ENCODE measurements at regions of chr15 and their contacts with region 1.

Region 1: DNA sequence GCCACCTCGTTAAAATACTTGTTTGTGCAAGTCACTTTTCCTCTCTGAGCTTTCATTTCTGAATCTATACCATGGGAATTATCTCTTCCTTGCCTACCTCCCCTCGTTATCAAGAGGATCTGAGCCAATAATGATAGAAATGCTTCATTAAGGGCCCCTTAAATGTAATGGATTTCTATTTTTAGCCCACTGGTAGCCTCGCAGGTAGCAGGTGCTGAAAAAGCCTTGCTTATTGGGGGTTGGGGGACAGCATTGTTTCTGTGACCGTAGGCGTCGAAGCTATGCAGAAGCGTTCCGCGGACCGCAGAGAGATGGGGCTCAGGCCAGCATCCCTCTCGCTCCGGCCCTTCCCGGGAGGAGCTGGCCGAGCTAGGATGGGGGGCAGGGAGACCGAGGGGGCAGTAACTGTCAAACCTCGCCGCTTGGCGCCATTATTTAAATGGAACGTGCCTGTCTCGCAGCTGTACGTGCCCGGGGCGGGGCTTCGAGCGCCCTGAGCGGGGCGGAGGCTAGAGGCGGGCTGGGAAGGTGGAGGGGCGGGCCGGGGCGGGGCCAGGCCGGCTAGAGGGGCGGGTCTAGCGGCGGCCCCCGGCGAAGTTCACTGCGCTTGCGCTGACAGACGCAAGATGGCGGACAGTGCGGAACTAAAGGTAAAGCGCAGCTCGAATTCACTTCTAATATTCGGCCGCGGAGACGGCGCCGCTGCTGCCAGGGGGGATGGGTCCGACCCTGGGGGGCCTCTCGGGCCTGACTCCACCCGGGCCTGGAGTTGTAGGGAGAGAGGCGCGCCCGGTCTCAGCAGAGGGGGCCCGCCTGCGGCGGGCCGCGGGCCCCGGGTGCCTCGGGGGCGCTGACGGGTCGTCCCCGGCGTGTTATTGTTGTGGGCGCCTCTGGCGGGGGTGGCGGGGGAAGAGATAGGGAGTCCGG is at the start of gene PIAS1:
- DNase-seq: peak; percentile 90 to 97
- ATAC-seq: peak; percentile 88 to 98 (median 93)
- H3K4me3 ChIP-seq: peak within 1 kb of the TSS; percentile 99
- H3K4me3 Mint-ChIP-seq: peak within 1 kb of the TSS; percentile 98
- H3K27ac ChIP-seq: peak within 1 kb of the TSS; percentile 83
- H3K27ac Mint-ChIP-seq: peak within 1 kb of the TSS; percentile 91 to 92
- H3K4me1 ChIP-seq: peaks cover 12% of the 10 kb centered on the region
- H3K4me1 Mint-ChIP-seq: peaks cover 42 to 47% of the 10 kb centered on the region in 2 donors
- H3K27me3 ChIP-seq: no peaks in the 10 kb centered on the region
- H3K27me3 Mint-ChIP-seq: no peaks in the 10 kb centered on the region
- CTCF ChIP-seq: no peak
- total RNA-seq, gene PIAS1: 94.7 to 103 (median 99.2) TPM

Region 2: DNA sequence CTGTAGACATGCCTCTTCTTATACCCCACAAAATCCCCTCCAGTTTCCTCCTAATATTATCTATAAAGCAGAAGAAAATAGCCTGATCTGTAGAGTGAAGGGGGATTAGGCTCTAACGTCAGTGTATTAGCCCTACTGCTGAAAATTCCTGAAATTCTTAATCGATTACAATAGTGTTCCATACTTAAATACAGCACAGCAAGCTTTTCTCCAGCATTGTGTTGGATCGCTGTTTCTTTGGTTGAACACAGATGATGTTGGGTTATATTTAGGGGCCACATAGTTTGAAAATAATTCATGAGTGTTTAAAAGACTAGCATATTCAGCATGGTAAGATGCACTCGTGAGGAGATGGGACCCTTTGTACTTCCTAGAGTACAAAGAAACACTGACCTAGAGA is 52.7 kb after region 1 on chr15:
- intact Hi-C with region 1: loop called (anchors 5 kb)
- DNase-seq: no peak
- ATAC-seq: no peak
- H3K4me3 ChIP-seq: no peak overlapping the region
- H3K4me3 Mint-ChIP-seq: no peak overlapping the region
- H3K27ac ChIP-seq: no peak overlapping the region
- H3K27ac Mint-ChIP-seq: peak overlapping the region in 1 of 2 donors; percentile 23
- H3K4me1 ChIP-seq: no peaks in the 10 kb centered on the region
- H3K4me1 Mint-ChIP-seq: peaks cover 55 to 61% of the 10 kb centered on the region in 2 donors
- H3K27me3 ChIP-seq: no peaks in the 10 kb centered on the region
- H3K27me3 Mint-ChIP-seq: no peaks in the 10 kb centered on the region
- CTCF ChIP-seq: no peak

Region 3: GRCh38 chr15:68124700-68125099 is 70.7 kb after region 1 on chr15:
- intact Hi-C with region 1: no loop called
- DNase-seq: no peak
- ATAC-seq: no peak
- H3K4me3 ChIP-seq: no peak overlapping the region
- H3K4me3 Mint-ChIP-seq: no peak overlapping the region
- H3K27ac ChIP-seq: no peak overlapping the region
- H3K27ac Mint-ChIP-seq: peak overlapping the region; percentile 4 to 47
- H3K4me1 ChIP-seq: no peaks in the 10 kb centered on the region
- H3K4me1 Mint-ChIP-seq: peaks cover 32 to 45% of the 10 kb centered on the region in 2 donors
- H3K27me3 ChIP-seq: no peaks in the 10 kb centered on the region
- H3K27me3 Mint-ChIP-seq: no peaks in the 10 kb centered on the region
- CTCF ChIP-seq: no peak

Region 4: GRCh38 chr15:68229386-68230156 is 175.6 kb after region 1 on chr15 and contains the start of gene CLN6:
- intact Hi-C with region 1: loop called (anchors 2 kb)
- DNase-seq: peak; percentile 77 to 89
- ATAC-seq: peak; percentile 89 to 96 (median 89)
- H3K4me3 ChIP-seq: peak within 1 kb of the TSS; percentile 72
- H3K4me3 Mint-ChIP-seq: peak within 1 kb of the TSS; percentile 92
- H3K27ac ChIP-seq: peak within 1 kb of the TSS; percentile 39
- H3K27ac Mint-ChIP-seq: peak within 1 kb of the TSS; percentile 73 to 85
- H3K4me1 ChIP-seq: peaks cover 25% of the 10 kb centered on the region
- H3K4me1 Mint-ChIP-seq: peaks cover 27 to 31% of the 10 kb centered on the region in 2 donors
- H3K27me3 ChIP-seq: no peaks in the 10 kb centered on the region
- H3K27me3 Mint-ChIP-seq: peaks cover 1 to 3% of the 10 kb centered on the region in 2 donors
- CTCF ChIP-seq: no peak
- total RNA-seq, gene CLN6: 14.9 to 19.0 (median 15.5) TPM